ENCODE measurements at regions of chr1 and their contacts with region 1.

Region 1: DNA sequence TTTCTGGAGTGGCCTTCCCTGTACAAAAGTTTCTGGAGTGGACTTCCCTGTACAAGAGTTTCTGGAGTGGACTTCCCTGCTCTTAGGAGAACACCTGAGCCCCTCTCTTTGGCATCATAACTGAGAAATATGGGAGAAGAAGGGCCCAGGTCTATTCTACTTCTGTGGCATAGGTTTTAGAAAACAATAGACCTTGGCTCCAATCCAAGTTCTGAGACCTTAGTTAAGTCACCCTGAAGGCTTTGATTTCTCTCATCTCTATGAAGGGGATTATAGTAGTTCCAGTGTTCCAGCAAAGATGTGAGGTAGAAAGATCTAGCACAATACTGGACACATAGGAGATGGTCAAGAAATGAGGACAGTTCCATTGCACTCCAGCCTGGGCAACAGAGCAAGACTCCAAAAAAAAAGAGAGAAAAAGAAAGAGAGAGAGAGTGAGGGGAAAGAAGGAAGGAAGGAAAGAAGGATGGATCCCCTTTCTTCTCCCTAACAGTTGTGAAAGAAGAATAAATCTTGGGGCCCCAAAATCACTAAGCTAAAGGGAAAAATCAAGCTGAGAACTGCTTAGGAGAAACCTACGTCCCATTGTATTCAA is 13.3 kb upstream of the EIF4G3 start:
- DNase-seq: no peak
- ATAC-seq: no peak
- H3K4me3 ChIP-seq: no peak overlapping the region
- H3K27ac ChIP-seq: no peak overlapping the region
- H3K4me1 ChIP-seq: no peaks in the 10 kb centered on the region; a peak in 1 of 5 replicates
- H3K27me3 ChIP-seq: peaks cover 20 to 36% of the 10 kb centered on the region in 2 experiments
- CTCF ChIP-seq: no peak
- EP300 ChIP-seq: no peak
- POLR2A ChIP-seq: no peak
- RAD21 ChIP-seq: no peak

Region 2: DNA sequence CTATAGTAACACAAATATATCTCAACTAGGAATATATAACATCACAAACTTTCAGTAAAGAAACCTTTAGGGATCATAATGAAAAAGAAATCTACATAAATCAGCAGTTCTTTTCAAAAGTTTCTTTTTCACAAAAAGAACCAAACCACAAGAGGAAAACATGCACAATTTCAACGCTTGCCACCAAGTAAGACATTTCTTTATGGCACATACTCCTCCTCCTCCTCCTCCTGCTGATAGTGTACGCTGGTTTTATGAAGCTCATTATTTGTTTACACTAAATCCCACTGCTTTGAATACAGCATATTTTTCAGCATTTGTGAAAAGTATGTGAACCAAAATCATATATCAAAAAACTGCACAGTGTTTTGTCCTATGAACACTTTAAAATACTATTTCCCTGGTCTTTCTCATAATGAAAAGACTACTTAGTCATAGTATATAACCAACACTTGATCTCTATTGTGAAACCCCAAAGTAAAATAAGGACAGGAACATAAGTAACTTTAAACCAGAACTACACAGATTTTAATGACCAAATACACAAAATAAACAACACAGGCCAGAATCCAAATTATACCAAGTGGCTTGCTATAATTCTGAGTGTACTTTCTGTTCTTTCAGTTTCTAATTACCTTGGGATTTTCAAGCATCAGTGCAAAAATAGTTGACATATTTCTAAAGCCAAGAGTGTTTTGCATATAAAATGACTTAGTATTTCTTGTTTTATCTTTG is 197.5 kb before region 1 on chr1:
- CTCF ChIA-PET with region 1: interaction called, 3 read pairs
- POLR2A ChIA-PET with region 1: no interaction called
- in situ Hi-C with region 1: loop called (anchors 5 kb)
- intact Hi-C with region 1: no loop called
- DNase-seq: no peak
- ATAC-seq: no peak
- H3K4me3 ChIP-seq: no peak overlapping the region
- H3K27ac ChIP-seq: no peak overlapping the region
- H3K4me1 ChIP-seq: no peaks in the 10 kb centered on the region
- H3K27me3 ChIP-seq: no peaks in the 10 kb centered on the region
- CTCF ChIP-seq: no peak
- EP300 ChIP-seq: no peak
- POLR2A ChIP-seq: no peak
- RAD21 ChIP-seq: no peak

Region 3: GRCh38 chr1:21176586-21177555 is 13.1 kb before region 1 on chr1 and contains the start of gene EIF4G3:
- CTCF ChIA-PET with region 1: no interaction called
- POLR2A ChIA-PET with region 1: interaction called, 10 read pairs
- in situ Hi-C with region 1: no loop called
- intact Hi-C with region 1: no loop called
- DNase-seq: peak; percentile 95 to 99 (median 98)
- ATAC-seq: peak; percentile 99
- H3K4me3 ChIP-seq: peak within 1 kb of the TSS; percentile 88
- H3K27ac ChIP-seq: peak within 1 kb of the TSS; percentile 83
- H3K4me1 ChIP-seq: peaks cover 16 to 20% of the 10 kb centered on the region in 2 experiments; a peak in 4 of 5 replicates
- H3K27me3 ChIP-seq: no peaks in the 10 kb centered on the region
- CTCF ChIP-seq: no peak
- EP300 ChIP-seq: no peak
- POLR2A ChIP-seq: peak; percentile 90
- RAD21 ChIP-seq: no peak
- polyA plus RNA-seq, gene EIF4G3: 6.7 to 10.1 TPM

Measured in K562 (cell line).